Keratinocyte (primary cell): ENCODE measurements at regions of chr1 and their contacts with region 1.

Region 1: GRCh38 chr1:153352523-153352922 is 3.9 kb upstream of the PGLYRP4 start:
- DNase-seq: no peak
- H3K4me3 ChIP-seq: no peak overlapping the region
- H3K27ac ChIP-seq: no peak overlapping the region
- H3K4me1 ChIP-seq: peaks cover 18% of the 10 kb centered on the region
- H3K27me3 ChIP-seq: peaks cover 3% of the 10 kb centered on the region
- CTCF ChIP-seq: peak; percentile 82 to 89 (median 87)

Region 2: GRCh38 chr1:153404768-153405167 is 52.2 kb after region 1 on chr1:
- dilution Hi-C with region 1: loop called (anchors 10 kb)
- DNase-seq: no peak
- H3K4me3 ChIP-seq: no peak overlapping the region
- H3K27ac ChIP-seq: no peak overlapping the region
- H3K4me1 ChIP-seq: no peaks in the 10 kb centered on the region
- H3K27me3 ChIP-seq: peaks cover 23% of the 10 kb centered on the region
- CTCF ChIP-seq: peak; percentile 66 to 80 (median 79)

Region 3: DNA sequence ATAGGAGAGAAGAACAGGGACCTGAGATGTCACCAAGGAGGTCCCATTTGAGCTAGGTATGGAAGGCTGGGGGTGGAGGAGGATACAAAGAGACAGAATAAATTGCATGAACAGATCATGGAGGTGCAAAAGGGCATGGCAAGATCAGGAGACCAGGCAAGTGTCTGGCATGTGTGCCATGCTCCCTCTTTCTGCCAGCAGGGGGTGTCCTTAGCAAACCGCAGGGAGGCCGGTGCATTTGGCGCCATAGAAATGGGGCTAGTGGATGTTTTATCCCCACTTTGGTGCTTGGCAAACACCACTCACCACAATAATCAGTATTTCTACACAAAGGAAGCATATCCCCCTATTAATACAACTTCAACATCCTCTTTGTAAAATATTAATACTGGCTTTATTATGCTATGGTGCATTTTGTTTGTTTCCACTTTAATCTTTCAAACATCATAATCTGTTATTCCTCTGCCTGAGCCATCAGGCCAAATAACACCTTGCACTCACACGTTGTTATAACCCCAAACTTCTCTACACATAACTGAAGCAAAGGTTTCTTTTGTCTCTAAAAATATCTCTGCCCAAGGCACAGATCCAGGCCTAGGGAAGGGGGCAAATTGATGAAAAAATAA is 157.3 kb after region 1 on chr1:
- dilution Hi-C with region 1: loop called (anchors 10 kb)
- DNase-seq: no peak
- H3K4me3 ChIP-seq: no peak overlapping the region
- H3K27ac ChIP-seq: no peak overlapping the region
- H3K4me1 ChIP-seq: peaks cover 32% of the 10 kb centered on the region
- H3K27me3 ChIP-seq: no peaks in the 10 kb centered on the region
- CTCF ChIP-seq: peak; percentile 84 to 96 (median 91)